Caco-2 (cell line): ENCODE measurements at regions of chr2 and their contacts with region 1.

Region 1: DNA sequence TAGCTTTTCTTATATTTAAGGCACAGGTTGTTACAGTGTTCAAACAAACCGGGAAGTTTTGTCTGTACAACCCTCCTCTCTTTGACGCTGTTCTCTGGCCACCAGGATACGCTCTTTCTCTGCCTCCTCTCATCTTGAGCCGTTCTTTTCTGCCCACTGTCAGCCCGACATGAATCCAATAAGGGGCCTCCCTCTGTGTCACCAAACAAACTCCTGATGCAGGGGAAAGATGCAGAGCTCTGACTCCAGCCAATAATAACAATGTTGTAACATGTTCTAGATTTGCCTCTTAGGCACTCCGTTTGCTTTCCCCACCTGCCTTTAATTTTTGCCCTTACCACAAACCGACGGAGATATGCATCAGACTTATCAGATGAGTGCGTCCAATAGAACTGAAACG is 449.3 kb downstream of the SLC4A3 start:
- DNase-seq: peak in 1 of 2 experiments; percentile 12
- H3K4me3 ChIP-seq: no peak overlapping the region
- H3K4me3 Mint-ChIP-seq: no peak overlapping the region
- H3K27ac Mint-ChIP-seq: no peak overlapping the region
- H3K4me1 ChIP-seq: peaks cover 8% of the 10 kb centered on the region; the same call in 1 of the 2 replicates
- H3K4me1 Mint-ChIP-seq: peaks cover 17% of the 10 kb centered on the region
- H3K27me3 ChIP-seq: no peaks in the 10 kb centered on the region
- H3K27me3 Mint-ChIP-seq: peaks cover 19% of the 10 kb centered on the region
- CTCF ChIP-seq: no peak

Region 2: GRCh38 chr2:220117025-220117424 is 40.3 kb after region 1 on chr2:
- CTCF ChIA-PET with region 1: no interaction called
- POLR2A ChIA-PET with region 1: no interaction called
- intact Hi-C with region 1: loop called (anchors 1 kb)
- DNase-seq: no peak
- H3K4me3 ChIP-seq: no peak overlapping the region
- H3K4me3 Mint-ChIP-seq: no peak overlapping the region
- H3K27ac Mint-ChIP-seq: no peak overlapping the region
- H3K4me1 ChIP-seq: no peaks in the 10 kb centered on the region
- H3K4me1 Mint-ChIP-seq: no peaks in the 10 kb centered on the region
- H3K27me3 ChIP-seq: no peaks in the 10 kb centered on the region
- H3K27me3 Mint-ChIP-seq: peaks cover 7% of the 10 kb centered on the region
- CTCF ChIP-seq: no peak

Region 3: DNA sequence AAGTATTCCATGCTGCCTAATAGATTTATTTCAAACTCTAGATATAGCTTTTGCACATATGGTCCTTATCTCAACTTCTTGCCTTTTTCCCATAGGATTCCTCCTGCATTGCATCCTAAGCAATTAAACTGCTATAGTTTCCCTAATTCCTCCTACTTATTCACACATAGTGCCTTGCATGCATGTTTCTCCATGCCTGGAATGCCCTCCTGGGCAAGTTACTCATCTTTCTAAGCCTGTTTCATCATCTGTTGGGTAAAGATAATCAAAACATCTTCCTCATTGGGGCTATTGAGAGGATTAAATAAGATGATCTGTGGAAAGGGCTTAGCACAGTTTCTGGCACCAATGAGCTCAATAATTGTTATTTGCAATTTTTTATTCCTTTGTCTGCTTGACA is 277.2 kb after region 1 on chr2:
- CTCF ChIA-PET with region 1: no interaction called
- POLR2A ChIA-PET with region 1: interaction called, 10 read pairs
- intact Hi-C with region 1: no loop called
- DNase-seq: no peak
- H3K4me3 ChIP-seq: no peak overlapping the region
- H3K4me3 Mint-ChIP-seq: no peak overlapping the region
- H3K27ac Mint-ChIP-seq: no peak overlapping the region
- H3K4me1 ChIP-seq: no peaks in the 10 kb centered on the region
- H3K4me1 Mint-ChIP-seq: no peaks in the 10 kb centered on the region
- H3K27me3 ChIP-seq: no peaks in the 10 kb centered on the region
- H3K27me3 Mint-ChIP-seq: peaks cover 8% of the 10 kb centered on the region
- CTCF ChIP-seq: no peak